GM10248 (cell line): ENCODE measurements at regions of chr3 and their contacts with region 1.

Region 1: GRCh38 chr3:50227390-50228183 is 8.4 kb upstream of the GNAI2 start:
- DNase-seq: peak; percentile 94
- CTCF ChIP-seq: peak; percentile 82

Region 2: DNA sequence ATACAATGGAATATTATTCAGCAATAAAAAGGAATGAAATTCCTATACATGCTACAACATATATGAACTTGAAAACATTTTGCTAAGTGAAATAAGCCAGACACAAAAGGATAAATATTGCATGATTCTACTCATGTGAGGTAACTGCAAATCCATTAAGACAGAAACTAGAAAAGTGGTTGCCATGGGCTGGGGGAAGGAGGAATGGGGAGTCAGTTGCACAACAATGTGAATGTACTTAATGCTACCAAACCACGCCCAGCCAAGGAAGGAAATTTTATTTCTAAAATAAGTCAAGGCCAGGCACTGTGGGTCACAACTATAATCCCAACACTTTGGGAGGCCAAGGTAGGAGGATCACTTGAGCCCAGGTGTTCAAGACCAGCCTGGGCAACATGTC is 494.0 kb before region 1 on chr3:
- CTCF ChIA-PET with region 1: no interaction called
- POLR2A ChIA-PET with region 1: no interaction called
- DNase-seq: no peak
- CTCF ChIP-seq: no peak

Region 3: GRCh38 chr3:50121416-50122032 is 106.1 kb before region 1 on chr3:
- CTCF ChIA-PET with region 1: interaction called, 22 read pairs
- POLR2A ChIA-PET with region 1: no interaction called
- DNase-seq: peak; percentile 87
- CTCF ChIP-seq: peak; percentile 62

Region 4: DNA sequence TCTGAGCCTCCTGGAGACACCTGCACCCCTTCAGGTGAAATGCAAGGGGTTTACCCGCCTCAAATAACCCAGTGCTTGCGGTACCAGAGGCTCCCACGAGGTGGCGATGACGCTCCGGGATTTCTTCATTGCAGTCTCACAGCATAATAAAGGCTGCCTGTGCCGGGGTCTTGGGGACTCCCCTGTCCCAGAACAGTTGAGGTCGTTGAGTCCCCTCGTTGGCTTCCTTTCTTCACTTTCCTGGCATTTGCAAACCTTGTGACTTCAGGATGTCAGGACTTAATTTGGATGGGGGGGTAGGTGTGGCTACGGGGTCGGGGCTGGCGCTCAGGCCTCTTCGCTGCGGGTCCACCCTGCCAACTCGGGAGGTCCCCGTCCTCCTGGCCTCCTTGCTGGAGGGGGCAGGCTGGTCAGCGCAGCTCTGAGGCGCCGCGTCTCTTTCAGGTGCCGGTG is 34.9 kb before region 1 on chr3:
- CTCF ChIA-PET with region 1: interaction called, 393 read pairs
- POLR2A ChIA-PET with region 1: interaction called, 3 read pairs
- DNase-seq: peak; percentile 85
- CTCF ChIP-seq: peak; percentile 97

Region 5: DNA sequence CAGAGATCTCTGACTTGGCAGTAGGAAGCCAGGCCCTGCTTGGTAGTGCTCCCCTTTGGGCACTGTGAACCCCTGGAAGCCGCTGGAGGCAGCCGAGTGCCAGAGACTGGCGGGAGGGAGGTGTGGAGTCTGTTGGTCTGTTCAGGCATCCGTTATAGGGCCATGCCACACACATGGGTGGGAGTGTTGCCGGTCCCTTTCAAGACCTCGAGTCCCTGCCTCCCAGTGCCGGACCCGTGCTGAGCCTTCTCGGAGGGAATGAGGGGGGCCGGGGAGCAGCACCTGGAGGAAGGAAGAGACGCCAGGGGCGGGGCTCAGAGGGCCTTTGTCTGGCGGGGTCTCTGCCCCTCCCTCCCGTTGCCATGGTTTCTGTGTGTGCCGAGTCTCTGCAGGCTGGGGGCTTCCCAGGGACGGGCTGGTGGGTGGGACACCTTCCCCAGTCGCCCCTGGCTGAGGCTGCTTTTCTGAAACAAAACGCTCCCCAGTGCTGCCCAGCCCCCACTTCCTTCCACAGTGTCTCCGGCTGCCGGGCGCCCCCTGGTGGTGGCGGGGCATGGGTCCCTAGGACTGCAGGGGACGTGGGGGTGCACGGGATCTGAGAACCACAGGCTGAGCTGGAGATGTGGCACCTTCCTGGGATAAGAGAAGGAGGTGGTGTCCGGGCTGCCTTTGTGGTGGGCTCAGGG is 18.4 kb after region 1 on chr3:
- CTCF ChIA-PET with region 1: interaction called, 276 read pairs
- POLR2A ChIA-PET with region 1: no interaction called
- DNase-seq: peak; percentile 87
- CTCF ChIP-seq: peak; percentile 99

Region 6: DNA sequence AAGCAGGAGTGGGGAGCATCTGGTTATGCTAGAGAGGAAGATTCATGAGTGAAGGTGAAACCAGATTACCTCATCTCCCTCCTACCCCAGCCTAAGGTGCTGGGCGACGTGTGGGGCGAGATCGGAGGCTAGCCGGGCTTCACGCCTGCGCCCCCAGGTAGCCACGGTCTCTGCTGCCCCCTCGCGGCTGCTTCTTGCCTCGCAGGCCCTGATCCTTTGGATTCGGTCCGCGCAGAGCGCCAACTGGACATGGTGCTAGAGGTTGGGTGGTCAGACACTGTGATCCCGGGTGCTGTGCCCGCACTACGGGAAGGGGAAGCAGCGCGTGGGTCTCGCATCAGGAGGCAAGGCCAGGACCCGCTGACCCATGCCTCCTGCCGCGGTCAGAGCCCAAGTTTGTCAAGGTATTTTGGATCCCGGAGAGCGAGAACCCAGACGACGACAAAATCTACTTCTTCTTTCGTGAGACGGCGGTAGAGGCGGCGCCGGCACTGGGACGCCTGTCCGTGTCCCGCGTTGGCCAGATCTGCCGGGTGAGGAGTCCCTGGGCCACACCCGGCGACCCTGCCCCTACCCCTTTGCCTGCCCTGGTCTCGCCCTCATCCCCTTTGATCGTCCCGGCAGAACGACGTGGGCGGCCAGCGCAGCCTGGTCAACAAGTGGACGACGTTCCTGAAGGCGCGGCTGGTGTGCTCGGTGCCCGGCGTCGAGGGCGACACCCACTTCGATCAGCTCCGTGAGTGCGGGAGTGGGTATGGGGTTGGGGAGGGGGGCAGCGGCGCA is 45.5 kb after region 1 on chr3:
- CTCF ChIA-PET with region 1: interaction called, 25 read pairs
- POLR2A ChIA-PET with region 1: no interaction called
- DNase-seq: peak; percentile 98
- CTCF ChIP-seq: peak; percentile 98